ENCODE measurements at regions of chr21 and their contacts with region 1.

Region 1: GRCh38 chr21:36104317-36105300 is 30.3 kb upstream of the CBR3 start:
- H3K4me3 ChIP-seq: no peak overlapping the region
- H3K27ac ChIP-seq: no peak overlapping the region
- H3K4me1 ChIP-seq: no peaks in the 10 kb centered on the region
- CTCF ChIP-seq: no peak

Region 2: GRCh38 chr21:36087362-36088138 is 17.1 kb before region 1 on chr21:
- CTCF ChIA-PET with region 1: interaction called, 13 read pairs
- POLR2A ChIA-PET with region 1: no interaction called
- H3K4me3 ChIP-seq: no peak overlapping the region
- H3K27ac ChIP-seq: no peak overlapping the region
- H3K4me1 ChIP-seq: no peaks in the 10 kb centered on the region
- CTCF ChIP-seq: peak; percentile 29; the same call in 1 of the 2 replicates